ENCODE measurements at regions of chr2 and their contacts with region 1.

Region 1: GRCh38 chr2:217886720-217887309 is 116.0 kb downstream of the TNS1 start:
- DNase-seq: peak; percentile 82 to 89
- H3K4me3 ChIP-seq: no peak overlapping the region
- H3K27ac ChIP-seq: peak overlapping the region in 2 of 3 donors; percentile 18 to 61
- H3K4me1 ChIP-seq: peaks cover 17 to 36% of the 10 kb centered on the region in 2 donors
- H3K27me3 ChIP-seq: no peaks in the 10 kb centered on the region
- CTCF ChIP-seq: peak; percentile 58 to 84 (median 72)
- POLR2A ChIP-seq: no peak

Region 2: DNA sequence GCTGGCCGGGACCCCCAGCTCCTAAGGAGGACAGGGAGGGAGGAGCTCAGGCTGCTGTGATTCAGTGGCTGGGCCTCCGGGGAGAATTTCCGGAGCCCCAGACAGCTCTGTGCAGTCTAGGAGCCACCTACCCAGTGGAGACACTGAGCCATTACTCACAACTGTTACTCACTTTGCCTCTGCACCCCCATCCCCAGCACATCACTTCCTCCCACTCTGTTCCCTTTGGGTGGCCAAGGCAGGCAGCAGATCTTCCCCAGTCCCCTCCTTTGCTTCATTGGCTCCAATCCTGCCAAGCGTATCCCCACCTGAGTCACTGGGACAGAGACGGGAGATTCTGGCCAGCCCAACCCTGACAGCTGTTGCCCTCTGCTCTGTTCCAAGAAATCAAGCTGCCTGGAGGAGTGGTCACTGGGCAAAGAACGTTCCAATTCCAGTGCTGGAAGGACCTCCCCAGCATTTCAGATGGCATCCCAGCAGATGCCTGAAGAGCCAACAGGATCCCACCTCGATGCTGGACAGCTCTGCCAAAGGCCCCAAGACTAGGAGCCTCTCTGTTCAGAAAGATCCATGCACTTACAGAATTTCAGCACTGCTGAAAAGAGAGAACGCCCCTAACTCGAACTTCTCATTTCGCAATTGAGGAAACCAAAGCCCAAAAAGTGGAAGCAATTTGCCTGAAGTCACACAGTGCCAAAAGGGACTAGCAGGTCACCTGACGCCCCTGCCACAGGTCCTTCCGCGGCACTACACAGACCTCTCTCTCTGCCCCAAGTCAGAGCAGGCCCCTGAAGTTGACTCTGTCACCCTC is 47.7 kb after region 1 on chr2:
- intact Hi-C with region 1: loop called (anchors 5 kb)
- DNase-seq: peak; percentile 47 to 55
- H3K4me3 ChIP-seq: no peak overlapping the region
- H3K27ac ChIP-seq: peak overlapping the region; percentile 96 to 99 (median 97)
- H3K4me1 ChIP-seq: peaks cover 100% of the 10 kb centered on the region in 2 donors
- H3K27me3 ChIP-seq: no peaks in the 10 kb centered on the region
- CTCF ChIP-seq: no peak
- POLR2A ChIP-seq: no peak

Region 3: GRCh38 chr2:217947383-217948350 is 60.9 kb after region 1 on chr2:
- intact Hi-C with region 1: no loop called
- DNase-seq: peak; percentile 56 to 59
- H3K4me3 ChIP-seq: no peak overlapping the region
- H3K27ac ChIP-seq: peak overlapping the region in 1 of 3 donors; percentile 17
- H3K4me1 ChIP-seq: peaks cover 39 to 65% of the 10 kb centered on the region in 2 donors
- H3K27me3 ChIP-seq: no peaks in the 10 kb centered on the region
- CTCF ChIP-seq: peak in 1 of 6 experiments; percentile 15
- POLR2A ChIP-seq: no peak

Region 4: GRCh38 chr2:217988014-217988839 is 101.4 kb after region 1 on chr2:
- intact Hi-C with region 1: loop called (anchors 5 kb)
- DNase-seq: peak; percentile 97
- H3K4me3 ChIP-seq: no peak overlapping the region
- H3K27ac ChIP-seq: peak overlapping the region; percentile 86 to 94 (median 86)
- H3K4me1 ChIP-seq: peaks cover 19 to 39% of the 10 kb centered on the region in 2 donors
- H3K27me3 ChIP-seq: no peaks in the 10 kb centered on the region
- CTCF ChIP-seq: peak; percentile 86 to 98 (median 93)
- POLR2A ChIP-seq: peak in 1 of 2 donors; percentile 41